ENCODE measurements at regions of chr10 and their contacts with region 1.

Region 1: GRCh38 chr10:127415901-127416581 is 133.1 kb upstream of the NPS start:
- DNase-seq: no peak
- H3K4me3 Mint-ChIP-seq: no peak overlapping the region
- H3K27ac Mint-ChIP-seq: no peak overlapping the region
- H3K4me1 Mint-ChIP-seq: no peaks in the 10 kb centered on the region
- H3K27me3 Mint-ChIP-seq: no peaks in the 10 kb centered on the region

Region 2: DNA sequence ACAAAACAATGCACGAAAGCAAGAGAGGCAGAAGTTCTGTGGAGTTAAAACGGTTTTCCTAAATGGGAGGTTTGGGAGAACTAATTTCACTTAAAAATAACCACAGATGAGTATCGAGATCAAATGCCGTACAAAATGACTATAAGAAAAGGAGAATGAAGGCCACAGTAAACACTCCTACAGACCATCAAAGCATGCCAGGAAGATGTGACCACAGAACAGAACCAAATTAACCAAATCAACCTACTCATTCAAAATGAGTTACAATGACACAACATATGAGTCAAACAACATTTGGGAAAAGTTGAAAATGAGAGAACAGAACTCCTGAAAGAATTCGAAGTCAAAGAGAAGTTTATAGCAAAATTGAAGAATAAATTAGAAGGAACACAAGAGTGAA is 535.1 kb before region 1 on chr10:
- CTCF ChIA-PET with region 1: no interaction called
- intact Hi-C with region 1: no loop called
- DNase-seq: no peak
- H3K4me3 Mint-ChIP-seq: no peak overlapping the region
- H3K27ac Mint-ChIP-seq: no peak overlapping the region
- H3K4me1 Mint-ChIP-seq: no peaks in the 10 kb centered on the region
- H3K27me3 Mint-ChIP-seq: peaks cover 3% of the 10 kb centered on the region

Region 3: GRCh38 chr10:127441350-127442219 is 25.5 kb after region 1 on chr10:
- CTCF ChIA-PET with region 1: no interaction called
- intact Hi-C with region 1: loop called (anchors 2 kb)
- DNase-seq: no peak
- H3K4me3 Mint-ChIP-seq: no peak overlapping the region
- H3K27ac Mint-ChIP-seq: no peak overlapping the region
- H3K4me1 Mint-ChIP-seq: no peaks in the 10 kb centered on the region
- H3K27me3 Mint-ChIP-seq: peaks cover 2% of the 10 kb centered on the region

Region 4: GRCh38 chr10:127548022-127548421 is 132.0 kb after region 1 on chr10:
- CTCF ChIA-PET with region 1: no interaction called
- intact Hi-C with region 1: no loop called
- DNase-seq: no peak
- H3K4me3 Mint-ChIP-seq: no peak overlapping the region
- H3K27ac Mint-ChIP-seq: no peak overlapping the region
- H3K4me1 Mint-ChIP-seq: no peaks in the 10 kb centered on the region
- H3K27me3 Mint-ChIP-seq: peaks cover 5% of the 10 kb centered on the region